ENCODE measurements at regions of chr18 and their contacts with region 1.

Region 1: DNA sequence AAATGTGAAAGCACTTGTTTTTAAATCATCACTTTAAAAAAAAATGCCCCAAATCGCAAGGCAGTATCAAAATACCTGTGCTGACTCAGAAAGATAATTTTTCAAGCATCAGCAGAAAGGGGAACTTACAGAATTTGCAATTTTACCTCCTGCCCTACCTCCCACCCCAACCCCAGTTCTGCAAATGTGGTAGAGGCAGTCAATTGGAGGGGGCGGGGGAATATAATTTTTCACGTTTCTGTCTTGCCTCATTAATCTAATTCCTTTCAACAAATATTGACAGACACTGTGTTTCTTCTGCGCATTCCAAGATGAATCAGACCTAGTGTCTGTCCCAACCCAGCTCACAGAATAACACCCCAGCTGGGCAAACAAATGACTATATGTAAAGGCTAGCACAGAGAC is 76.8 kb downstream of the ALPK2 start:
- DNase-seq: no peak
- ATAC-seq: peak; percentile 84
- H3K4me3 Mint-ChIP-seq: peak overlapping the region; percentile 45
- H3K27ac Mint-ChIP-seq: peak overlapping the region; percentile 84
- H3K4me1 Mint-ChIP-seq: peaks cover 54% of the 10 kb centered on the region
- H3K27me3 Mint-ChIP-seq: no peaks in the 10 kb centered on the region
- CTCF ChIP-seq: no peak

Region 2: GRCh38 chr18:58505181-58505580 is 46.9 kb before region 1 on chr18:
- CTCF ChIA-PET with region 1: no interaction called
- POLR2A ChIA-PET with region 1: no interaction called
- intact Hi-C with region 1: no loop called
- DNase-seq: no peak
- ATAC-seq: peak; percentile 66
- H3K4me3 Mint-ChIP-seq: no peak overlapping the region
- H3K27ac Mint-ChIP-seq: no peak overlapping the region
- H3K4me1 Mint-ChIP-seq: peaks cover 12% of the 10 kb centered on the region
- H3K27me3 Mint-ChIP-seq: no peaks in the 10 kb centered on the region
- CTCF ChIP-seq: no peak

Region 3: GRCh38 chr18:58535340-58536201 is 16.5 kb before region 1 on chr18:
- CTCF ChIA-PET with region 1: interaction called, 9 read pairs
- POLR2A ChIA-PET with region 1: interaction called, 9 read pairs
- intact Hi-C with region 1: loop called (anchors 1 kb)
- DNase-seq: no peak
- ATAC-seq: peak; percentile 78
- H3K4me3 Mint-ChIP-seq: peak overlapping the region; percentile 63
- H3K27ac Mint-ChIP-seq: peak overlapping the region; percentile 81
- H3K4me1 Mint-ChIP-seq: peaks cover 68% of the 10 kb centered on the region
- H3K27me3 Mint-ChIP-seq: no peaks in the 10 kb centered on the region
- CTCF ChIP-seq: no peak

Region 4: GRCh38 chr18:58541789-58542425 is 10.2 kb before region 1 on chr18:
- CTCF ChIA-PET with region 1: no interaction called
- POLR2A ChIA-PET with region 1: interaction called, 3 read pairs
- intact Hi-C with region 1: loop called (anchors 1 kb)
- DNase-seq: no peak
- ATAC-seq: peak; percentile 58
- H3K4me3 Mint-ChIP-seq: peak overlapping the region; percentile 55
- H3K27ac Mint-ChIP-seq: peak overlapping the region; percentile 65
- H3K4me1 Mint-ChIP-seq: peaks cover 62% of the 10 kb centered on the region
- H3K27me3 Mint-ChIP-seq: no peaks in the 10 kb centered on the region
- CTCF ChIP-seq: no peak

Region 5: GRCh38 chr18:58649966-58650816 is 98.1 kb after region 1 on chr18:
- CTCF ChIA-PET with region 1: no interaction called
- POLR2A ChIA-PET with region 1: no interaction called
- intact Hi-C with region 1: loop called (anchors 2 kb)
- DNase-seq: no peak
- ATAC-seq: peak; percentile 93
- H3K4me3 Mint-ChIP-seq: peak overlapping the region; percentile 24
- H3K27ac Mint-ChIP-seq: peak overlapping the region; percentile 74
- H3K4me1 Mint-ChIP-seq: peaks cover 69% of the 10 kb centered on the region
- H3K27me3 Mint-ChIP-seq: no peaks in the 10 kb centered on the region
- CTCF ChIP-seq: no peak